Mammary epithelial cell (primary cell): ENCODE measurements at regions of chr19 and their contacts with region 1.

Region 1: GRCh38 chr19:4768934-4769777 is 22.4 kb upstream of the FEM1A start:
- DNase-seq: peak; percentile 66
- H3K4me3 ChIP-seq: no peak overlapping the region
- H3K27ac ChIP-seq: no peak overlapping the region
- H3K4me1 ChIP-seq: no peaks in the 10 kb centered on the region
- H3K27me3 ChIP-seq: no peaks in the 10 kb centered on the region
- CTCF ChIP-seq: no peak

Region 2: DNA sequence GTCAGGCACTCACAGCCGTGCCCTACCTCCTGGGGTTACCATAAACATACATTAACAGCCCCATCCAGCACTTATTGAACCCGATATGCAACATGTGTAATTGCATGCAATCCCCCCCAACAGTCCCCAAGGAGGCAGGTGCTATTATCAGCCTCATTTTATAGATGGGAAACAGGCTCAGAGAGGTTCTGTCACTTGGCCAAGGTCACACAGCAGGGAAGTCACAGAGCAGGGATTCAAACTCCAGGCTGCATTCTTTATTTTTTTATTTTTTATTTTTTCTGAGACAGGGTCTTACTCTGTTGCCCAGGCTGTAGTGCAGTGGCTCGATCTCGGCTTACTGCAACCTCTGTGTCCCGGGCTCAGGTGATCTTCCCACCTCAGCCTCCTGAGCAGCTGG is 168.3 kb before region 1 on chr19:
- CTCF ChIA-PET with region 1: no interaction called
- dilution Hi-C with region 1: loop called (anchors 5 kb)
- in situ Hi-C with region 1: no loop called
- intact Hi-C with region 1: no loop called
- DNase-seq: no peak
- H3K4me3 ChIP-seq: no peak overlapping the region
- H3K27ac ChIP-seq: no peak overlapping the region
- H3K4me1 ChIP-seq: peaks cover 6% of the 10 kb centered on the region
- H3K27me3 ChIP-seq: peaks cover 2% of the 10 kb centered on the region
- CTCF ChIP-seq: no peak

Region 3: GRCh38 chr19:4647676-4648644 is 121.2 kb before region 1 on chr19:
- CTCF ChIA-PET with region 1: no interaction called
- dilution Hi-C with region 1: loop called (anchors 5 kb)
- in situ Hi-C with region 1: no loop called
- intact Hi-C with region 1: no loop called
- DNase-seq: no peak
- H3K4me3 ChIP-seq: no peak overlapping the region
- H3K27ac ChIP-seq: no peak overlapping the region
- H3K4me1 ChIP-seq: no peaks in the 10 kb centered on the region
- H3K27me3 ChIP-seq: no peaks in the 10 kb centered on the region
- CTCF ChIP-seq: no peak